ENCODE measurements at regions of chr7 and their contacts with region 1.

Region 1: GRCh38 chr7:116671681-116672595 is at the start of gene MET:
- DNase-seq: peak; percentile 69
- ATAC-seq: peak; percentile 93
- H3K4me3 ChIP-seq: peak within 1 kb of the TSS; percentile 86 to 89
- H3K27ac ChIP-seq: peak within 1 kb of the TSS; percentile 94
- H3K4me1 ChIP-seq: peaks cover 33% of the 10 kb centered on the region
- H3K27me3 ChIP-seq: no peaks in the 10 kb centered on the region
- CTCF ChIP-seq: peak; percentile 86
- total RNA-seq, gene MET: 103 TPM

Region 2: GRCh38 chr7:116380025-116380424 is 291.9 kb before region 1 on chr7:
- CTCF ChIA-PET with region 1: no interaction called
- POLR2A ChIA-PET with region 1: no interaction called
- in situ Hi-C with region 1: no loop called
- intact Hi-C with region 1: no loop called
- DNase-seq: no peak
- ATAC-seq: no peak
- H3K4me3 ChIP-seq: no peak overlapping the region
- H3K27ac ChIP-seq: peak overlapping the region; percentile 79; the same call in 1 of the 2 replicates
- H3K4me1 ChIP-seq: peaks cover 17% of the 10 kb centered on the region
- H3K27me3 ChIP-seq: no peaks in the 10 kb centered on the region
- CTCF ChIP-seq: no peak

Region 3: GRCh38 chr7:116601426-116601825 is 70.5 kb before region 1 on chr7:
- CTCF ChIA-PET with region 1: interaction called, 12 read pairs
- POLR2A ChIA-PET with region 1: no interaction called
- in situ Hi-C with region 1: no loop called
- intact Hi-C with region 1: no loop called
- DNase-seq: no peak
- ATAC-seq: no peak
- H3K4me3 ChIP-seq: no peak overlapping the region
- H3K27ac ChIP-seq: no peak overlapping the region
- H3K4me1 ChIP-seq: no peaks in the 10 kb centered on the region
- H3K27me3 ChIP-seq: no peaks in the 10 kb centered on the region
- CTCF ChIP-seq: no peak

Region 4: DNA sequence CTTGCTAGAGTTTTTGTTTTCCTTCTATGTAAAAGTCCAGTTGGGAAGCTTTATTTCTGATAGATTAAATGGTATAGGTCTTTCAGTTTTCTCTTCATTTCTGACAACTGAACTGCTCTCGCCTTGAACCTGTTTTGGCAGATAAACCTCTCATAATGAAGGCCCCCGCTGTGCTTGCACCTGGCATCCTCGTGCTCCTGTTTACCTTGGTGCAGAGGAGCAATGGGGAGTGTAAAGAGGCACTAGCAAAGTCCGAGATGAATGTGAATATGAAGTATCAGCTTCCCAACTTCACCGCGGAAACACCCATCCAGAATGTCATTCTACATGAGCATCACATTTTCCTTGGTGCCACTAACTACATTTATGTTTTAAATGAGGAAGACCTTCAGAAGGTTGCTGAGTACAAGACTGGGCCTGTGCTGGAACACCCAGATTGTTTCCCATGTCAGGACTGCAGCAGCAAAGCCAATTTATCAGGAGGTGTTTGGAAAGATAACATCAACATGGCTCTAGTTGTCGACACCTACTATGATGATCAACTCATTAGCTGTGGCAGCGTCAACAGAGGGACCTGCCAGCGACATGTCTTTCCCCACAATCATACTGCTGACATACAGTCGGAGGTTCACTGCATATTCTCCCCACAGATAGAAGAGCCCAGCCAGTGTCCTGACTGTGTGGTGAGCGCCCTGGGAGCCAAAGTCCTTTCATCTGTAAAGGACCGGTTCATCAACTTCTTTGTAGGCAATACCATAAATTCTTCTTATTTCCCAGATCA is 27.2 kb after region 1 on chr7:
- CTCF ChIA-PET with region 1: no interaction called
- POLR2A ChIA-PET with region 1: no interaction called
- in situ Hi-C with region 1: no loop called
- intact Hi-C with region 1: no loop called
- DNase-seq: no peak
- ATAC-seq: peak; percentile 17; the same call in 1 of the 2 replicates
- H3K4me3 ChIP-seq: no peak overlapping the region
- H3K27ac ChIP-seq: peak overlapping the region; percentile 60
- H3K4me1 ChIP-seq: peaks cover 42% of the 10 kb centered on the region
- H3K27me3 ChIP-seq: no peaks in the 10 kb centered on the region
- CTCF ChIP-seq: no peak

Region 5: GRCh38 chr7:116843378-116843777 is 171.4 kb after region 1 on chr7:
- CTCF ChIA-PET with region 1: no interaction called
- POLR2A ChIA-PET with region 1: no interaction called
- in situ Hi-C with region 1: no loop called
- intact Hi-C with region 1: no loop called
- DNase-seq: no peak
- ATAC-seq: no peak
- H3K4me3 ChIP-seq: no peak overlapping the region
- H3K27ac ChIP-seq: no peak overlapping the region
- H3K4me1 ChIP-seq: no peaks in the 10 kb centered on the region
- H3K27me3 ChIP-seq: no peaks in the 10 kb centered on the region; the same call in 1 of the 2 replicates
- CTCF ChIP-seq: no peak